ENCODE measurements at regions of chr11 and their contacts with region 1.

Region 1: GRCh38 chr11:75428281-75428724 is 4.7 kb downstream of the KLHL35 start:
- DNase-seq: no peak
- ATAC-seq: no peak
- H3K4me3 ChIP-seq: no peak overlapping the region
- H3K27ac ChIP-seq: no peak overlapping the region
- H3K4me1 ChIP-seq: peaks cover 16% of the 10 kb centered on the region
- CTCF ChIP-seq: no peak
- EP300 ChIP-seq: no peak
- POLR2A ChIP-seq: no peak
- RAD21 ChIP-seq: no peak

Region 2: GRCh38 chr11:75399344-75400145 is 28.8 kb before region 1 on chr11 and contains the start of gene RPS3:
- CTCF ChIA-PET with region 1: interaction called, 231 read pairs
- POLR2A ChIA-PET with region 1: interaction called, 4 read pairs
- DNase-seq: peak; percentile 88 to 93
- ATAC-seq: peak; percentile 94 to 96
- H3K4me3 ChIP-seq: peak within 1 kb of the TSS; percentile 77
- H3K27ac ChIP-seq: peak within 1 kb of the TSS; percentile 90 to 93
- H3K4me1 ChIP-seq: peaks cover 34% of the 10 kb centered on the region
- CTCF ChIP-seq: peak; percentile 28; the same call in 1 of the 3 replicates
- EP300 ChIP-seq: no peak
- POLR2A ChIP-seq: peak; percentile 97
- RAD21 ChIP-seq: no peak
- polyA plus RNA-seq, gene RPS3: 2,571 and 3,468 TPM in 2 replicates

Region 3: GRCh38 chr11:75826461-75827230 is 398.3 kb after region 1 on chr11:
- CTCF ChIA-PET with region 1: no interaction called
- POLR2A ChIA-PET with region 1: no interaction called
- DNase-seq: no peak
- ATAC-seq: no peak
- H3K4me3 ChIP-seq: no peak overlapping the region
- H3K27ac ChIP-seq: no peak overlapping the region
- H3K4me1 ChIP-seq: peaks cover 7% of the 10 kb centered on the region; the same call in 2 of the 3 replicates
- CTCF ChIP-seq: no peak
- EP300 ChIP-seq: no peak
- POLR2A ChIP-seq: no peak
- RAD21 ChIP-seq: no peak